ENCODE measurements at regions of chr12 and their contacts with region 1.

Region 1: GRCh38 chr12:113462117-113462774 is 9.4 kb downstream of the LHX5 start:
- DNase-seq: no peak
- H3K4me3 ChIP-seq: no peak overlapping the region; the same call in 1 of the 2 replicates
- H3K27me3 ChIP-seq: peaks cover 54% of the 10 kb centered on the region
- CTCF ChIP-seq: peak; percentile 97

Region 2: DNA sequence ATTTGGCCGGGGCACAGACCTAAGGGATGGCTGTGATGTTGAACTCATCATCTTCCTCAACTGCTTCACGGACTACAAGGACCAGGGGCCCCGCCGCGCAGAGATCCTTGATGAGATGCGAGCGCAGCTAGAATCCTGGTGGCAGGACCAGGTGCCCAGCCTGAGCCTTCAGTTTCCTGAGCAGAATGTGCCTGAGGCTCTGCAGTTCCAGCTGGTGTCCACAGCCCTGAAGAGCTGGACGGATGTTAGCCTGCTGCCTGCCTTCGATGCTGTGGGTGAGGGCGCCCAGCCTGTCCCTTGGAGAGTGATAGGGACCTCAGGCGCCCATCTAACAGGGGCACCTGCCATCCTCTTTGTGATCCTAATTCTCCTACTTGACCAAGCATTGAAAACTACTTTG is 511.5 kb before region 1 on chr12:
- CTCF ChIA-PET with region 1: no interaction called
- POLR2A ChIA-PET with region 1: no interaction called
- DNase-seq: no peak
- H3K4me3 ChIP-seq: no peak overlapping the region
- H3K27me3 ChIP-seq: no peaks in the 10 kb centered on the region
- CTCF ChIP-seq: no peak

Region 3: GRCh38 chr12:113912760-113913329 is 450.6 kb after region 1 on chr12:
- CTCF ChIA-PET with region 1: interaction called, 33 read pairs
- POLR2A ChIA-PET with region 1: no interaction called
- DNase-seq: no peak
- H3K4me3 ChIP-seq: no peak overlapping the region
- H3K27me3 ChIP-seq: no peaks in the 10 kb centered on the region
- CTCF ChIP-seq: peak; percentile 96

Region 4: DNA sequence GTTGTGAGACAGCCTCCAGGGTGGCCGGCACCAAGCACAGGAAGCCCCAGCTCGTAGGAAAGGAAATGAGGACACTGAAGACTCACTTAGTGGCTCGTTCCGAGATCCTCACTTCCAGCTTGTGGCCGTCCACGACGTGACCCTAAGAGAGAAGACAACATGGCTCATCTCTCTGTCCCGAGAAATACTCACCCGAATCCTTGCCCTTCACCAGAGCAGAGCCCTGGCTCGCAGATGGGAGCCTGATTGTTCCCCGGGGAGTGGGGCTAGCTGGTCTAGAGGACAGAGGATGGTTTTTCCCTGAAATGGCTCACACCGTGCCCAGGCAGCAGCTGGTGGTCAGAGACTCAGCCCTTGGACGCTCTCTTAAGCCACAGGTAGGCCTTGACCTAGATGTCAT is 456.1 kb after region 1 on chr12:
- CTCF ChIA-PET with region 1: interaction called, 33 read pairs
- POLR2A ChIA-PET with region 1: no interaction called
- DNase-seq: no peak
- H3K4me3 ChIP-seq: no peak overlapping the region
- H3K27me3 ChIP-seq: no peaks in the 10 kb centered on the region
- CTCF ChIP-seq: no peak

Region 5: GRCh38 chr12:114131824-114132223 is 669.6 kb after region 1 on chr12:
- CTCF ChIA-PET with region 1: no interaction called
- POLR2A ChIA-PET with region 1: no interaction called
- DNase-seq: no peak
- H3K4me3 ChIP-seq: no peak overlapping the region
- H3K27me3 ChIP-seq: peaks cover 5% of the 10 kb centered on the region
- CTCF ChIP-seq: peak; percentile 27